IMR-90 (cell line): ENCODE measurements at regions of chr1 and their contacts with region 1.

Region 1: GRCh38 chr1:210360852-210361477 is 32.3 kb downstream of the HHAT start:
- DNase-seq: peak; percentile 74
- ATAC-seq: peak; percentile 91
- H3K4me3 ChIP-seq: no peak overlapping the region
- H3K27ac ChIP-seq: no peak overlapping the region
- H3K4me1 ChIP-seq: peaks cover 3% of the 10 kb centered on the region; the same call in 1 of the 2 replicates
- H3K27me3 ChIP-seq: no peaks in the 10 kb centered on the region; the same call in 1 of the 2 replicates
- CTCF ChIP-seq: peak; percentile 85
- POLR2A ChIP-seq: no peak
- RAD21 ChIP-seq: peak; percentile 80

Region 2: GRCh38 chr1:210296682-210297081 is 64.3 kb before region 1 on chr1:
- CTCF ChIA-PET with region 1: no interaction called
- POLR2A ChIA-PET with region 1: no interaction called
- dilution Hi-C with region 1: no loop called
- in situ Hi-C with region 1: no loop called
- intact Hi-C with region 1: no loop called
- DNase-seq: no peak
- ATAC-seq: no peak
- H3K4me3 ChIP-seq: no peak overlapping the region
- H3K27ac ChIP-seq: no peak overlapping the region
- H3K4me1 ChIP-seq: peaks cover 3% of the 10 kb centered on the region; the same call in 1 of the 2 replicates
- H3K27me3 ChIP-seq: peaks cover 29% of the 10 kb centered on the region
- CTCF ChIP-seq: no peak
- POLR2A ChIP-seq: no peak
- RAD21 ChIP-seq: no peak

Region 3: DNA sequence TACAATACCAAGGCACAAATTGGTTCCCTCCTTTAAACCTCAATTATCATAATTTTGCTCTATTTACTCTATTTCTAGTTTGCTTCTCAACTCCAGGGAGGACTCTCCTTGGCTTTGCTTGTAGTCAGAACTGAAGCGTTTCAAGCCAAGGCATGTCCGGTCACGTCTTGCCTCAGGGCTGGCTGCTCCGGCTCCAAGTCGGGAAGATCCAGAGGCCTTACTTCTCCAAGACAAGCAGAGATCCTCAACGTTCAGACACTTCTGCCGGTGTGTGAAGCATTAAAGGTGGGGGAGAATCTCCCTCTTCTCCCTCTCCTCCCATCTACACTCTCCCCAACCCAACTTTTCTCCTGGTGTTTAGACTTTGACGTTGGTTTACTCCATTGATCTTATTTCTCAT is 39.4 kb before region 1 on chr1:
- CTCF ChIA-PET with region 1: interaction called, 3 read pairs
- POLR2A ChIA-PET with region 1: interaction called, 19 read pairs
- dilution Hi-C with region 1: no loop called
- in situ Hi-C with region 1: no loop called
- intact Hi-C with region 1: no loop called
- DNase-seq: no peak
- ATAC-seq: no peak
- H3K4me3 ChIP-seq: no peak overlapping the region
- H3K27ac ChIP-seq: no peak overlapping the region
- H3K4me1 ChIP-seq: no peaks in the 10 kb centered on the region
- H3K27me3 ChIP-seq: peaks cover 5% of the 10 kb centered on the region
- CTCF ChIP-seq: no peak
- POLR2A ChIP-seq: no peak
- RAD21 ChIP-seq: no peak

Region 4: GRCh38 chr1:210335001-210335400 is 26.0 kb before region 1 on chr1:
- CTCF ChIA-PET with region 1: interaction called, 8 read pairs
- POLR2A ChIA-PET with region 1: no interaction called
- dilution Hi-C with region 1: no loop called
- in situ Hi-C with region 1: no loop called
- intact Hi-C with region 1: loop called (anchors 2 kb)
- DNase-seq: no peak
- ATAC-seq: no peak
- H3K4me3 ChIP-seq: no peak overlapping the region
- H3K27ac ChIP-seq: no peak overlapping the region
- H3K4me1 ChIP-seq: no peaks in the 10 kb centered on the region
- H3K27me3 ChIP-seq: 0 out of 2 replicates have a peak, but pooled peaks cover 4% of the 10 kb centered on the region
- CTCF ChIP-seq: no peak
- POLR2A ChIP-seq: no peak
- RAD21 ChIP-seq: no peak

Region 5: DNA sequence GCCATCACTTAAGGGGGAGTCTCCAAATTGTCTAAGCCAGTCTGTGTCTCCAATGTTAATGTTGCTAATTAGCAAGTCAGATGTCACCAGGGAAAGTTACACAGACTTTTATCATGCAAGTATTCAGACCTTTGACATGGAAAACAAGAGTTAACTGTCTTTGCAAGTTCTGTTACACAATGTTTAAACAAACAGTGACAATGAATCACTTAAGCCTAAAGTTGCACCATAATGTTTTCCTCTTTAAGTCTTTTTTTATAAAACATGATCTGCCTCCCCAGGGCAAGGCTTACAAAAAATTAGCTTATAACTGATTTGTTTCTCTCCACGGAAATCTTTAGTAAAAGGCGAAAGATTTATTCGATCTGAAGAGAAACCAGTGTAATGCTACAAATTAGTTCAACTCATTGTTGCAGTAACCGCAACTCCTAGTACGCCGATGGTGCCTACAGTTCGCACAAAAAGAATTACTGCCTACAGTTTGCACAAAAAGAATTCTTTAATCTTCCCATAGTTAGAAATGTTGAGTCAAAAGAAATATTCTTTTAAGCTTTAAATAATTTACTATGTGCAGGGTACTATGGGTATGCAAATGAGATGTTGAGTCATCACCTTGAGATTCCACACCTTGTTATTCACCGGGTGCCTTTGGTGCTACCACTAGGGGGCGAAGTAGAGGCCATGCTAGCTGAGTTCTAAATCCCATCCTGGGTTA is 13.1 kb after region 1 on chr1:
- CTCF ChIA-PET with region 1: interaction called, 23 read pairs
- POLR2A ChIA-PET with region 1: interaction called, 10 read pairs
- dilution Hi-C with region 1: no loop called
- in situ Hi-C with region 1: no loop called
- intact Hi-C with region 1: no loop called
- DNase-seq: peak; percentile 97
- ATAC-seq: peak; percentile 71
- H3K4me3 ChIP-seq: no peak overlapping the region
- H3K27ac ChIP-seq: peak overlapping the region; percentile 24; the same call in 1 of the 2 replicates
- H3K4me1 ChIP-seq: peaks cover 18% of the 10 kb centered on the region
- H3K27me3 ChIP-seq: no peaks in the 10 kb centered on the region
- CTCF ChIP-seq: peak; percentile 85
- POLR2A ChIP-seq: peak; percentile 100
- RAD21 ChIP-seq: peak; percentile 76

Region 6: DNA sequence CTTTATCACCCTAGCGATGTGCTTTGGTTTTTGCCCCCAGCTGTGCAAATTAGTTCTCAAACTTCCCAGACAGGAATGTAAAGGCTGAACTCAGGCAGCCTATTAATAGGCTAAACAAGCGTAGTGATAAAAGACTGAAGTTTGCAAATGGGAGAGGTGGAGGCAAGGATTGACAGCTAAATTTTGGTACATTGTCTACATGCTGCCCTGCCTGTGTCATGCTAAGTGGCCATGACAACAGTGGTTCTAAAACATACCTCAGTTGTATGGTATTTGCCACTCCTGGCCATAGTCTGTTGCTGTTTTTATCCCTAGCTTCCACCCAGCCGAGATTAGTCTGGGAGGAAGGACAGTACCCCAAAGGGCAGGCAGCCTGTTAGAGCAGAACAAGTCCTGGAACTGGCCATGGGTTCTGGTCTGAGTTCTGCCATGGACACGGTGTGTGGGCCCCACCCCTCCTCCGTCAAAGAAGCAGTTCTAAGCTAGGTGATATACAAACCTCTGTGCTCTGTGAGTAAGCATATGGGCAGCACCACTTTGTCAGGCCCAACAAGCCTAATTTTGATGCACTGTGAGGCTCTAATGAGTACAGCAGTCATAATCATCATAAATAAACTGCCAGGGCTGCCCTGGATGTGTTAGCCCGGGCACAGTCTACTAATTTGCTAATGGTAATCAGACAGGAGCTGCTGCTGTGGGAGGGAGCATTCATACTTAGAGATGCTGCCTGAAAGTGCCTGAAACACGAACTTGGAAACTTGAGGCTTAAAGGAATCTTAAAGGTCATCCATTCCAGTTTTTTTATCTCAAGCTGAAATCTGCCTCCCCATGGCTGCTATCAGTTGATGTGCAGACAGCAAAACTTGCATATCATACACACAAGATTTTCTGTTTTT is 144.9 kb after region 1 on chr1:
- CTCF ChIA-PET with region 1: no interaction called
- POLR2A ChIA-PET with region 1: no interaction called
- dilution Hi-C with region 1: no loop called
- in situ Hi-C with region 1: no loop called
- intact Hi-C with region 1: no loop called
- DNase-seq: no peak
- ATAC-seq: no peak
- H3K4me3 ChIP-seq: no peak overlapping the region
- H3K27ac ChIP-seq: no peak overlapping the region
- H3K4me1 ChIP-seq: no peaks in the 10 kb centered on the region
- H3K27me3 ChIP-seq: no peaks in the 10 kb centered on the region
- CTCF ChIP-seq: no peak
- POLR2A ChIP-seq: no peak
- RAD21 ChIP-seq: no peak